ENCODE measurements at regions of chr18 and their contacts with region 1.

Region 1: DNA sequence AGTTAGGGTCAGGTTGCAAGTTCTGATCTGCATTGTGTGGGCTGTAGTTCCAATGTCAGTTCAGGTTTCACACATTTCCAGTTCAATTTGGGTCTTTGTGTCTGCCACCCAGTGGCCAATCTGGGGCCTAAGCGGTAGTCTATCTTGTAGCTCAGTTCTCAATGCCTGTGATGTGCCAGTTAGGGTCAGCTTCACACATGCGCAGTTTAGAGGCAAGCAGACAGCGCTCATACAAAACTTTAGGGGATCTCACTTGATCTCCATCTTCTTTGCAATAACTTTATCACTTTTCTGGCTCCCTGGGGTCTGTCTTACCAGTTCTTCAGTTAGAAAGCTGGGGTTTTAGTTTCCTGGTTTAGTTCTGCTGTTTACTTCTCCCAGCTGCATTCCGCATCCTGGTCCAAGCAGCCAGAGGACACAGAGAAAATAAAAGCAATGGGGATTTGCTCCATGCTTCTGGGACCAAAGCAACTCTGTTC is 11.0 kb upstream of the ZNF24 start:
- DNase-seq: peak; percentile 72
- ATAC-seq: peak; percentile 99

Region 2: GRCh38 chr18:33916200-33916599 is 1439.0 kb before region 1 on chr18:
- intact Hi-C with region 1: no loop called
- DNase-seq: no peak
- ATAC-seq: no peak

Region 3: DNA sequence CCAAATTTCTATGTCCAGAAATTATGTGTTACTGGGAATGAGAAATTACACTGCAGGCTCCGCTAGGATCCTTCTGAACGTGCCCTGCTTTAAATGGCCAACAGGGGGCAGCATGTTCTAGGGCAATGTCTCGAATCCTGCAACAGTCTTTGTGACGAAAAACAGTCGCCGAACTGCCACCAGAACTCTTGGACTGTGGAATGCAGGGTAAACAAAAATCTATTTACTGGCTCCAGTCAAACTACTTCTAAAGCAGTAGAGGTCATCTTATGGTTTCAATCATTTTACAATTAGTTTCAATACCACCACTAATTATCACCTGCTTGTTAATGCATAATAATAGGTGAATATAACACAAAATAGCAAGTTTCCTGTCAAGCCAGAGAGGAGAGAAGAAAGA is 124.1 kb before region 1 on chr18:
- intact Hi-C with region 1: loop called (anchors 2 kb)
- DNase-seq: peak; percentile 78
- ATAC-seq: peak; percentile 88

Region 4: DNA sequence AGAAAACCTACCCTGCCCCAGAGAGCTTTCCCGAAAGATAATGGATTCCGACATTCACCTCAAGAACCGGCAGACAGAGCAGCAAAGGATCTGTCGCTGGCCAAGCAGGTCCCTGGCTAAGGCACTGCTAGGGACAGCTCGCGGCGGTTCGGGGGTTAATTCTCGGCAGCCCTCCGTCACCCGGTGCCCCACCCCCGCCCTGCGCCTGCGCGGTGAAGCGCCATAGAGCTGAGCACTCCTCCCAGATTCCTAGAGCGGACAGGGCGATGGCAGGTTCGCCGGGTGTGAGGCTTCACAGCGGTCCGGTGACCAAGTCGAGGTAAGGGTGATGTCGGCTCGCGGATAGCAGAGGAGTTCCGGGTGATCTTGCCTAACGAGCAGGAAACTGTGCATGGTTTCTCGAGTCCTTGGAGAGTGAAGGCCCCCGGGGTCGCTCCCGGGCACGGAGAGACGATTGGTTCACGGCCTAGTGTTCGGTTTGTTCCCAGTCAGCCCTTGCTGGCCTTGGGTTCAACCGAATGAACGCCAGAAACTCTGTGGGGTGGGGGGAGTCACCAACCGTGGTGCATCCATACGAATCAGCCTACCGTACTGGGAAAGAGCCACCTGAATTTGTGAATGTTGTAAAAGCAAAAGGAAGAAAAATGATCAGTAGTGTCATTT is 65.0 kb before region 1 on chr18 and contains the start of gene ZSCAN30:
- intact Hi-C with region 1: no loop called
- DNase-seq: peak; percentile 96
- ATAC-seq: peak; percentile 100
- total RNA-seq, gene ZSCAN30: 13.2 TPM

Measured in left ventricle myocardium superior (tissue), 1 donor.